ENCODE measurements at regions of chr7 and their contacts with region 1.

Region 1: DNA sequence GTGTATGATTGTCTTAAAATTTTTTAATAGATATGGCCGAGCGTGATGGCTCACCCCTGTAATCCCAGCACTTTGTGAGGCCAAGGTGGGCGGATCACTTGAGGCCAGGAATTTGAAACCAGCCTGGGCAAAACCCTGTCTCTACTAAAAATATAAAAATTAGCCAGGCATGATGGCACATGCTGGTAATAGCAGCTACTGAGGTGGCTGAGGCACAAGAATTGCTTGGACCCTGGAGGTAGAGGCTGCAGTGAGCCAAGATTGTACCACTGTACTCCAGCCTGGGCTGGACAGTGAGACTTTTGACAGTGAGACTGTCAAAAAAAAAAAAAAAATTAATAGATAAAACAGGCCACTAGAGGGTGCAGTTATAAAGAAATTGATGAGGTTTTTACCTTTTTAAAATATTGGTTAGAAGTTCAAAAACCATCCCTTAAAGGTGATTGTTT is 20.5 kb downstream of the NOM1 start:
- DNase-seq: no peak
- H3K4me3 Mint-ChIP-seq: no peak overlapping the region
- H3K27ac Mint-ChIP-seq: no peak overlapping the region
- H3K4me1 Mint-ChIP-seq: no peaks in the 10 kb centered on the region
- H3K27me3 Mint-ChIP-seq: no peaks in the 10 kb centered on the region

Region 2: GRCh38 chr7:156725077-156725476 is 244.9 kb before region 1 on chr7:
- CTCF ChIA-PET with region 1: no interaction called
- POLR2A ChIA-PET with region 1: no interaction called
- intact Hi-C with region 1: no loop called
- DNase-seq: no peak
- H3K4me3 Mint-ChIP-seq: no peak overlapping the region
- H3K27ac Mint-ChIP-seq: no peak overlapping the region
- H3K4me1 Mint-ChIP-seq: no peaks in the 10 kb centered on the region
- H3K27me3 Mint-ChIP-seq: no peaks in the 10 kb centered on the region

Region 3: DNA sequence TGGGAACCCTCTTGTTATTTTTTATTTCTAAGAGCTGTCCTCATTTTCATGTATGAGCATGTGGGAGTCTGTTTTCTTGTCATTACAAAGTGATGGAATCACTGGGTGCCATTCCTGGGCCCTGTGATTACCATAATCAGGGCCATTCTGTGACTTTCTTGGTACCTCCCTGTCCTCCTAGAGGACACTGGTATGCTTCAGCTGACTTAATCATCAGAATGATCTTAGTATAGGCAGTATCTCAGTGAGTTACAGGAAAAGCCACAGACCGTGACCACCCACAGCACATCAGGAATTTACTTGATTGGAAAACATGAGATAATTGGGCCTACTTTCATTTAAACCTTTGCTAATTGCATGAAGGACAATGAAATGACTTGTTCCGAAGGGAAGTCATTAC is 13.3 kb before region 1 on chr7:
- CTCF ChIA-PET with region 1: interaction called, 10 read pairs
- POLR2A ChIA-PET with region 1: no interaction called
- intact Hi-C with region 1: no loop called
- DNase-seq: no peak
- H3K4me3 Mint-ChIP-seq: no peak overlapping the region
- H3K27ac Mint-ChIP-seq: no peak overlapping the region
- H3K4me1 Mint-ChIP-seq: peaks cover 21% of the 10 kb centered on the region
- H3K27me3 Mint-ChIP-seq: no peaks in the 10 kb centered on the region